Dorsolateral prefrontal cortex (tissue), 120 donors: ENCODE measurements at regions of chr17 and their contacts with region 1.

Region 1: DNA sequence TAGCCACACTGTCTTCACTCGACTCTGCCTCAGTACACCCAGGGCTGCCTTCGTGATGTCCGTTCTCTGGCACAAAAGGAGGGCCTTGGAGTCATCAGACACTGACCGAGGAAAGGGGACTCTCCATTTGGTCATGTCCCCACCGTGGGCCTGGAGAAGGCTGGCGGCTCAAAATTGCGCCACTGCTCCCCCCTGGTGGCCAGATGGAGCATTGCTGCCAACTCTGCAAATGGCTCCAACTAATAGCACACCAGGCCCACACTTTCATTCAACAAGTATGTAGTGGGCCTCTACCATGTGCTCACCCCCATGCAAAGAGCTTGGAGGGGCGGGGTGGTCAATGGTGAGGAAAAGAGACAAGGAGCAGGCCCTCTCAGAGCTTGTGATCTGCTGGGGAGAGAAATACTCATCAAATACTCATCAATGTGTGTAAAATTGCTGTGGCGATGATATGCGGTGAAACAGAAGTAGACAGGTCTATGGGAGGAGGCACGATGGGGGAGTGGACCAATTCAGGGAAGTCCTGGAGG is 5.2 kb upstream of the GRIN2C start:
- DNase-seq: peak; percentile 71 to 91 (median 88)
- H3K4me3 ChIP-seq: no peak overlapping the region
- H3K27ac ChIP-seq: peak overlapping the region in 1 of 59 donors; percentile 95
- H3K27me3 ChIP-seq: peaks cover 0 to 23% (median 13%) of the 10 kb centered on the region in 45 donors
- CTCF ChIP-seq: peak; percentile 91 to 99 (median 98)

Region 2: GRCh38 chr17:74659898-74660297 is 205.0 kb before region 1 on chr17:
- intact Hi-C with region 1: loop called (anchors 5 to 10 kb)
- DNase-seq: no peak
- H3K4me3 ChIP-seq: no peak overlapping the region
- H3K27ac ChIP-seq: no peak overlapping the region
- H3K27me3 ChIP-seq: peaks cover 0 to 44% (median 8%) of the 10 kb centered on the region in 45 donors
- CTCF ChIP-seq: no peak

Region 3: GRCh38 chr17:74712756-74713155 is 152.2 kb before region 1 on chr17 and contains the start of gene CD300LF:
- intact Hi-C with region 1: no loop called
- DNase-seq: no peak
- H3K4me3 ChIP-seq: peak within 1 kb of the TSS in 19 of 59 donors; percentile 6 to 34 (median 23)
- H3K27ac ChIP-seq: peak within 1 kb of the TSS in 1 of 59 donors; percentile 10
- H3K27me3 ChIP-seq: peaks cover 0 to 15% (median 0%) of the 10 kb centered on the region in 45 donors
- CTCF ChIP-seq: no peak
- total RNA-seq, gene CD300LF: 0.31 to 5.8 (median 1.0) TPM in 100 of 120 experiments, not detected in the others

Region 4: GRCh38 chr17:74790161-74791054 is 74.5 kb before region 1 on chr17:
- intact Hi-C with region 1: loop called (anchors 1 to 2 kb)
- DNase-seq: no peak
- H3K4me3 ChIP-seq: no peak overlapping the region
- H3K27ac ChIP-seq: peak overlapping the region in 1 of 59 donors; percentile 28
- H3K27me3 ChIP-seq: no peaks in the 10 kb centered on the region
- CTCF ChIP-seq: no peak

Region 5: GRCh38 chr17:74842599-74843351 is 22.2 kb before region 1 on chr17:
- intact Hi-C with region 1: loop called in 1 of 2 experiments (anchors 2 kb)
- DNase-seq: peak in 8 of 10 donors; percentile 55 to 83 (median 66)
- H3K4me3 ChIP-seq: peak overlapping the region in 56 of 59 donors; percentile 20 to 64 (median 46)
- H3K27ac ChIP-seq: peak overlapping the region in 53 of 59 donors; percentile 17 to 93 (median 82)
- H3K27me3 ChIP-seq: no peaks in the 10 kb centered on the region
- CTCF ChIP-seq: peak in 52 of 56 donors; percentile 24 to 80 (median 54)

Region 6: GRCh38 chr17:74923533-74924249 is 58.8 kb after region 1 on chr17:
- intact Hi-C with region 1: no loop called
- DNase-seq: peak in 8 of 10 donors; percentile 35 to 75 (median 46)
- H3K4me3 ChIP-seq: peak overlapping the region in 57 of 59 donors; percentile 5 to 58 (median 39)
- H3K27ac ChIP-seq: no peak overlapping the region
- H3K27me3 ChIP-seq: peaks cover 6 to 69% (median 38%) of the 10 kb centered on the region in 45 donors
- CTCF ChIP-seq: peak; percentile 40 to 86 (median 73)

Region 7: DNA sequence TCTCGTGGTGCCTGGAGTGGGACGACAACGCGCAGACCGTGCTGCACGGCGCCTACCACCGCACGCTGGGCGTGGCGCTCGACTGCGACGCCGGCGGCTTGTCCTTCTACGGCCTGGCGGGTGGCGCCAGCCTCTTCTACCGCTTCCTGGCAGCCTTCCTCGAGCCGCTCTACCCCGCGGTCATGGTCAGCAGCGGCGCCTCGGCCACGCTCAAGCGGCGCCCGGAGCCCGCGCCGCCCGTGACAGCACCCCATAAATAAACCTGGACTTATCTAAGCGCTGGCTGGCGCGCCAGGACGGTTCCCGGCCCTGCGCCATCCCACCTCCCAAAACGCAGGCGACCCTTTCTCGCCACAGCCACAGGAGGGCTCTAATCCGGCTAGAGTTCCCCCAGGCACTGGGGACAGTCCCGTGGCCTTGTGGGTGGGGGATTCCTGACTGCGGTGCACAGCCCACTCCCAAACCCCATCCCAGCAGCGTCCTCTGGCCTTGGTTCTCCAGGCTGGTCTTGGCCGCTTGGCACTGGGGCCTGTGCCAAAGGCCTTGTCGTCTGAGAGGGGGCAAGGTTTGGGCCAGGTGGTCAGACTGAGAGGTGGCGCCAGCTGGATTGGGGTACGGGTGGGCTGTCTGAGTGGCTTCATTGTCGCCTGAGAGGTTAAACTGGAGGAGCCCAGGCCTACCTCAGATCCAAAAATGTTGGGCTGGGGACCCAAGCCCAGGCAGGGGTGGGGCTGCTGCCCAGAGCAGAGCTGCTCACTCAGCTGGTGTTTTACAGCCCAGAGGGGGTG is 212.8 kb after region 1 on chr17:
- intact Hi-C with region 1: no loop called
- DNase-seq: peak; percentile 42 to 79 (median 62)
- H3K4me3 ChIP-seq: peak overlapping the region; percentile 44 to 79 (median 64)
- H3K27ac ChIP-seq: peak overlapping the region in 58 of 59 donors; percentile 23 to 92 (median 75)
- H3K27me3 ChIP-seq: no peaks in the 10 kb centered on the region
- CTCF ChIP-seq: peak in 42 of 56 donors; percentile 10 to 64 (median 30)